Mammary epithelial cell (primary cell): ENCODE measurements at regions of chr12 and their contacts with region 1.

Region 1: DNA sequence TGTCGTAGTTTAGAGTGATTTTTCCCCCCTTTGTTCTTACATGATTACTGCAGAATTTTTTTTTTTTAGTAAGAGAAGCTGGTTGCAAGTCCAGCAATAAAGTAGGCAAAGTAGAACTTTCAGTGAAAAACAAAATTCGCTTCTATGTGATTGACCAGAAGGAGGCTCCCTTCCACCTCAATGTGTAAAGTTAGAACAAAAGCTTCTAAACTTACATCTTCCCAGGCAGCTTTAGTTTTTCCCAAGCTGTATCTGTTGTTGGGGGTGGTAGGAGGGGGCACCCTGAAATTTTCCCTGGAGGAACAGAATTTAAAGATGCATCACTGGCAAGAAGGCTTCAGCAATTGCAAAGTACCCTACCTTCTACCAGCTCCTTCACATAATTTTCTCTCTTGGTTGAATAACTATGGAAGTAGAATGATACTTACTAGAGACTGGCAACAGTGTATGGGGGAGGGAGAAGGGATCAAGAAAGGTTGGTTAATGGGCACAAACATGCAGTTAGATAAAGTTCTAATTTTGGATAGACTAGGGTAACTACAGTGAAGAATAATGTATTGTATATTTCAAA is 87.3 kb upstream of the E2F7 start:
- DNase-seq: peak; percentile 19
- H3K4me3 ChIP-seq: no peak overlapping the region
- H3K27ac ChIP-seq: no peak overlapping the region
- H3K4me1 ChIP-seq: peaks cover 6% of the 10 kb centered on the region
- H3K27me3 ChIP-seq: no peaks in the 10 kb centered on the region
- CTCF ChIP-seq: peak; percentile 48 to 70

Region 2: GRCh38 chr12:77049767-77050353 is 102.8 kb before region 1 on chr12:
- CTCF ChIA-PET with region 1: no interaction called
- dilution Hi-C with region 1: no loop called
- in situ Hi-C with region 1: no loop called
- intact Hi-C with region 1: loop called (anchors 1 kb)
- DNase-seq: peak; percentile 52
- H3K4me3 ChIP-seq: no peak overlapping the region
- H3K27ac ChIP-seq: no peak overlapping the region
- H3K4me1 ChIP-seq: no peaks in the 10 kb centered on the region
- H3K27me3 ChIP-seq: no peaks in the 10 kb centered on the region
- CTCF ChIP-seq: peak; percentile 81

Region 3: GRCh38 chr12:77925536-77926108 is 772.9 kb after region 1 on chr12:
- CTCF ChIA-PET with region 1: no interaction called
- dilution Hi-C with region 1: no loop called
- in situ Hi-C with region 1: no loop called
- intact Hi-C with region 1: loop called (anchors 5 kb)
- DNase-seq: peak; percentile 77
- H3K4me3 ChIP-seq: no peak overlapping the region
- H3K27ac ChIP-seq: no peak overlapping the region
- H3K4me1 ChIP-seq: peaks cover 5% of the 10 kb centered on the region
- H3K27me3 ChIP-seq: no peaks in the 10 kb centered on the region
- CTCF ChIP-seq: peak; percentile 98 to 99